Breast epithelium (tissue), 4 donors: ENCODE measurements at regions of chr1 and their contacts with region 1.

Region 1: DNA sequence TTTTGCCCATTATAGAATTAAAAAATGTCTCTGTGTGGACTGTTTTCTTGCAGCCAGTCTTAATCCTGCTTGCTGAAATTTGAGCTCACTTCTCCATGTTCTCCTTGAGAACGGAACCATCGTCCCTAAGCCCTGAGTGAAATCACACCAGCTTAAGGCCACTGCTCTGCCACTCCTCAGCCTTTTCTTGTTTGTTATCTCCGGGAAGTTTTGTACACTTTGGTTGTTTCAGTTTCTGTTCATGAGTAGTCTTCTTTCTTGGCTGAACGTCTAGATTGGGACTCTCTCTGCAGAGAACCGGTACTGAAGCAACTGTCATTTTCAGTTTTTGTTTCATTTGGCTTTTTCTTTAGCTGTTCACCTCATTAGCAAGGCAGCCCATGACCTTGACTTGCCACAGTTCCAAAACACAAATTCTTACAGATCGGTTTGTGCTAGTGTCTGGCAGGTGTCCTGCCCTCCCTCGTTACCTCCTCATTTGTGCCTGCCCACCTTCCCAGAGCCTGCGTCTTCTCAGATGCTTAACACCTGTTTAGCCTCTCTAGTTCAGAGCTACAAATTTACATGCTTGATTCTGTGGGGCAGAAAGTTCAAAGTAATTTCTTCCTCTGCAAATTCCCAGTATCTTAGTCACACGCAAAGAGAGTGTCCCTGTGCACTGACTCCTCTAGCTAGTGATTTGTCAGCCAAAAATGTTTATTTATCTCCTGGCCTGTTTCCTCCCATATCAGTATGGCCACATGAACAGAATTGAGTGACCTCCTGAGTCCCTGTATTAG is 12.4 kb downstream of the PSEN2 start:
- DNase-seq: no peak
- H3K4me3 ChIP-seq: peak overlapping the region in 2 of 3 donors; percentile 13 to 39
- H3K27ac ChIP-seq: peak overlapping the region in 1 of 2 donors; percentile 70
- H3K4me1 ChIP-seq: no peaks in the 10 kb centered on the region
- H3K27me3 ChIP-seq: no peaks in the 10 kb centered on the region
- CTCF ChIP-seq: no peak
- POLR2A ChIP-seq: no peak

Region 2: DNA sequence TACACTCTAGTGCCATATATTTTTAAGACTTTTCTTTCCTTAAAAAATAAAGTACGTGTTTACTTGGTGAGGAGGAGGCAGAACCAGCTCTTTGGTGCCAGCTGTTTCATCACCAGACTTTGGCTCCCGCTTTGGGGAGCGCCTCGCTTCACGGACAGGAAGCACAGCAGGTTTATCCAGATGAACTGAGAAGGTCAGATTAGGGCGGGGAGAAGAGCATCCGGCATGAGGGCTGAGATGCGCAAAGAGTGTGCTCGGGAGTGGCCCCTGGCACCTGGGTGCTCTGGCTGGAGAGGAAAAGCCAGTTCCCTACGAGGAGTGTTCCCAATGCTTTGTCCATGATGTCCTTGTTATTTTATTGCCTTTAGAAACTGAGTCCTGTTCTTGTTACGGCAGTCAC is 12.8 kb after region 1 on chr1:
- intact Hi-C with region 1: loop called (anchors 1 kb)
- DNase-seq: no peak
- H3K4me3 ChIP-seq: no peak overlapping the region
- H3K27ac ChIP-seq: no peak overlapping the region
- H3K4me1 ChIP-seq: no peaks in the 10 kb centered on the region
- H3K27me3 ChIP-seq: no peaks in the 10 kb centered on the region
- CTCF ChIP-seq: no peak
- POLR2A ChIP-seq: no peak

Region 3: GRCh38 chr1:226912587-226913176 is 29.9 kb after region 1 on chr1:
- intact Hi-C with region 1: no loop called
- DNase-seq: no peak
- H3K4me3 ChIP-seq: no peak overlapping the region
- H3K27ac ChIP-seq: no peak overlapping the region
- H3K4me1 ChIP-seq: no peaks in the 10 kb centered on the region
- H3K27me3 ChIP-seq: no peaks in the 10 kb centered on the region
- CTCF ChIP-seq: peak in 2 of 3 donors; percentile 40 to 47
- POLR2A ChIP-seq: no peak

Region 4: DNA sequence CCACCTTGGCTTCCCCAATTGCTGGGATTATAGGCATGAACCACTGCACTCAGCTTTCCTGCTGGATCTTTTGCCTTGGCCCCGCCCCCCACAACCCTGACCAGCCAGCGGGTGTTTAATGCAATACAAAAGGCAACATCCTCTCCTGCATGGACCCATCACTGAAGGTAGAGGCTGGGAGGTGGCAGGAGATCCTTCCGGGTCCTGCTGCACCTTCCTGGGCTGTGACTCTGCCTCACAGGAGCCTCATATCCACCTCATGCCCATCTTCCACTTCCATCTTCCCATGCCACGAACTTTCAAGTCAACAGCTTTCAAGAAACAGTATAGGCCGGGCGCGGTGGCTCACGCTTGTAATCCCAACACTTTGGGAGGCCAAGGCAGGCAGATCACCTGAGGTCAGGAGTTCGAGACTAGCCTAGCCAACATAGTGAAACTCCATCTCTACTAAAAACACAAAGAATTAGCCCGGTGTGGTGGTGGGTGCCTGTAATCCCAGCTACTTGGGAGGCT is 1076.6 kb after region 1 on chr1:
- intact Hi-C with region 1: loop called (anchors 5 kb)
- DNase-seq: no peak
- H3K4me3 ChIP-seq: no peak overlapping the region
- H3K27ac ChIP-seq: no peak overlapping the region
- H3K4me1 ChIP-seq: no peaks in the 10 kb centered on the region
- H3K27me3 ChIP-seq: peaks cover 0 to 4% of the 10 kb centered on the region in 2 donors
- CTCF ChIP-seq: no peak
- POLR2A ChIP-seq: no peak